MCF 10A (cell line): ENCODE measurements at regions of chrX and their contacts with region 1.

Region 1: DNA sequence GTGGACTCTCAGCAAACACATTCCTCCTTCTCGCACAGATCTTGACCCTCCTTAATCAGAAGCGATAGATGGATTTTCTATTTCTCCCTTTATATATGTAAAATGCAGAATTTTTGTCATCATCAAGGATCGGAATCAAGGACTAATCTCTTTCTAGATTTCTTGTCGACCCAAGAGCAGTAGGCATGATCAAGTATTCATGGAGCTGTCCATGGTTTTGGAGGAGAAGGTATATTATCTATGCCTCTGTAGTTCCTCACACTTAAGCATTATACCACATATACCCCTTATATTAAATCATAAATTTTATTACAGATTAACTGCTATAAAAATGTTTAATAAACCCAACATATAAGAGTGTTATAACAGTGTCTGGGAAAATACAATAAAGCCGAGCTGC is 886.8 kb downstream of the NLGN4X start:
- DNase-seq: no peak
- H3K4me3 Mint-ChIP-seq: no peak overlapping the region
- H3K27ac Mint-ChIP-seq: no peak overlapping the region
- H3K4me1 Mint-ChIP-seq: no peaks in the 10 kb centered on the region
- H3K27me3 Mint-ChIP-seq: no peaks in the 10 kb centered on the region
- CTCF ChIP-seq: no peak

Region 2: GRCh38 chrX:5306654-5307121 is 35.2 kb before region 1 on chrX:
- CTCF ChIA-PET with region 1: no interaction called
- POLR2A ChIA-PET with region 1: no interaction called
- intact Hi-C with region 1: loop called (anchors 2 kb)
- DNase-seq: no peak
- H3K4me3 Mint-ChIP-seq: no peak overlapping the region
- H3K27ac Mint-ChIP-seq: no peak overlapping the region
- H3K4me1 Mint-ChIP-seq: no peaks in the 10 kb centered on the region
- H3K27me3 Mint-ChIP-seq: no peaks in the 10 kb centered on the region
- CTCF ChIP-seq: no peak

Region 3: DNA sequence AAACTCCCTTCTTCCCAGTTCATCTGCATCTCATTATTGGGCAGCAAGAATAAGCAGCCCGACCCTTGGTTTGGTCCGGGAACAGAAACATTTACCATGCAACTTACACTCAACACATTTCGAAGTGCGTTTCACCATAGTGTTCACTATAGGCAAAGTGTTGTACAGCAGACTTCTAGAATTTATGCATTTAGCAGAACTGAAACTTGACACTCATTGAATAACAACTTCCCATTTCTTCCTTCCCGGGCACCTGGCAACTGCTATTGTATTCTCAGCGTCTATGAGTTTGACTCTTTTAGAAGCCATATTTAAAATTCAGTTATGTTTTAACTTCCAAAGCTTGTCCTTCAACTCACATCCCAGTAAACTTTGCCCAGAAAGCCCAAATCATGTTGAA is 46.2 kb after region 1 on chrX:
- CTCF ChIA-PET with region 1: no interaction called
- POLR2A ChIA-PET with region 1: no interaction called
- intact Hi-C with region 1: no loop called
- DNase-seq: no peak
- H3K4me3 Mint-ChIP-seq: no peak overlapping the region
- H3K27ac Mint-ChIP-seq: no peak overlapping the region
- H3K4me1 Mint-ChIP-seq: no peaks in the 10 kb centered on the region
- H3K27me3 Mint-ChIP-seq: no peaks in the 10 kb centered on the region
- CTCF ChIP-seq: no peak

Region 4: DNA sequence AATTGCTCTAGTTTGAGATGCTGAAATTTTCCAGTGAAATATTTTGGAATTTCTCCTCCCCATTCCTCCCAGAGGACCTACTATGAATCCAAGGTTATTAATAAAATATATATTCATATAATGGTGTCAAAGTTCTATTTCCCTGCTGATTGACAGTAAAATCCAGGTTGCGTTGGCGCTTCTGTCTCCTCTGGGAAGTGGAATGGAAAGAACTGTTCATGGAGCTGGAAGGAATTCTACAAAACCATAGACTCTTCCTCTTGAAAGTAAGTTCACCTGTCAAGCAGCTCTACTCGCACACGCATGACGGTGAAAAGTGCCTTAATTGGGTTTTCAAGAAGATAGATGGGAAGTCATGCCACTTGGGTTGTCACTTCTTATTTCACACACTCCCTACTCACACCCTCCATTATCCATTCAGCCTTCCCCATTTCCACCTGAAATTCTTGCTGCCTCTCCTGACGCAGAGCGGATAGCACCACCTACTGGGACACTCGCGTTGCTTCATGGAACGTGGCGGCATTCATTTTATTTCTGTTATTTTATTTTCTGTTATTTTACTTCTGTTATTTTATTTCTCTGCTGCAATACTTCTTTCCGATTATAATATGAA is 535.2 kb after region 1 on chrX:
- CTCF ChIA-PET with region 1: no interaction called
- POLR2A ChIA-PET with region 1: no interaction called
- intact Hi-C with region 1: no loop called
- DNase-seq: no peak
- H3K4me3 Mint-ChIP-seq: no peak overlapping the region
- H3K27ac Mint-ChIP-seq: no peak overlapping the region
- H3K4me1 Mint-ChIP-seq: no peaks in the 10 kb centered on the region
- H3K27me3 Mint-ChIP-seq: no peaks in the 10 kb centered on the region
- CTCF ChIP-seq: peak; percentile 57